ENCODE measurements at regions of chr1 and their contacts with region 1.

Region 1: DNA sequence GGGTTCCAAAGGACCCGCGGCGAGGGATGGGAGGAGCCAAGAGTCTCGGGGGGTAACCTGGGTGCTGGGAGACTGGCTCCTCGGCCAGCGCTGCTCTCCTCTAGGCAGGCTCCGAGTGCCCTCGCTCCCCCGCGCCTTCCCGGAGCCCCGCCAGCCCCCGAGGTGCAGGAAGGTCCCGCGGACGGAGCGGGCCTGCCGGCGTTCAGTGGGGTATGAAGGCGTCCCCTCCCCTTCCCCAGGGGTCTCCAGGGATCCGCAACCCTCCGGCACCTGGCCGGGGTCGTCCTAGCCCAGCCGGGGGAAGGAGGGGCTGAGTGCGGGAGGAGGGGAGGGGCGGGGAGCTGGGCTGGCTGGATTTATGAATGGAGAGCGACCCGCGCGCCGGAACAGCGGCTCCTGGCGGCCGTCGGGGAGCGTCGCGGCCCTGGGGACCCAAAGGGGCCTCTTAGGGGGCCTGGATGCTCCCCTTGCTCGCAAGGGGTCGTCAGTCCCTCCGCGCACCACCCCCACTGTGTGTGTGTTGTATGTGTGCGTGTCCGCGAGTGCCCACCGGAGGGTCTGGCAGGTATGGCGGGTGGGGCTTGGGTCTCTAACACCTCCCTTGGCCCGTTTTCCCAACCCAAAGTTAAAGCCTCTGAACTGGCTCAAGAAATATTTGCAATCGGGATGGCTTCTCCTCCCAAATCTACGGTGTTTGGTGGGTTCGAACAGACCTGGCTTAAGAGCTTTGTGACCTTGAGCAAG is 600 bp downstream of the HCRTR1 start:
- DNase-seq: peak; percentile 68
- ATAC-seq: peak; percentile 76
- H3K4me3 ChIP-seq: peak overlapping the region in 4 of 5 experiments; percentile 38 to 55 (median 44)
- H3K4me3 Mint-ChIP-seq: peak overlapping the region; percentile 70
- H3K27ac ChIP-seq: no peak overlapping the region
- H3K27ac Mint-ChIP-seq: no peak overlapping the region
- H3K4me1 ChIP-seq: peaks cover 13 to 19% of the 10 kb centered on the region in 2 donors
- H3K4me1 Mint-ChIP-seq: peaks cover 22% of the 10 kb centered on the region
- H3K27me3 ChIP-seq: peaks cover 0 to 33% (median 12%) of the 10 kb centered on the region in 4 experiments
- H3K27me3 Mint-ChIP-seq: peaks cover 35% of the 10 kb centered on the region
- CTCF ChIP-seq: peak; percentile 87

Region 2: DNA sequence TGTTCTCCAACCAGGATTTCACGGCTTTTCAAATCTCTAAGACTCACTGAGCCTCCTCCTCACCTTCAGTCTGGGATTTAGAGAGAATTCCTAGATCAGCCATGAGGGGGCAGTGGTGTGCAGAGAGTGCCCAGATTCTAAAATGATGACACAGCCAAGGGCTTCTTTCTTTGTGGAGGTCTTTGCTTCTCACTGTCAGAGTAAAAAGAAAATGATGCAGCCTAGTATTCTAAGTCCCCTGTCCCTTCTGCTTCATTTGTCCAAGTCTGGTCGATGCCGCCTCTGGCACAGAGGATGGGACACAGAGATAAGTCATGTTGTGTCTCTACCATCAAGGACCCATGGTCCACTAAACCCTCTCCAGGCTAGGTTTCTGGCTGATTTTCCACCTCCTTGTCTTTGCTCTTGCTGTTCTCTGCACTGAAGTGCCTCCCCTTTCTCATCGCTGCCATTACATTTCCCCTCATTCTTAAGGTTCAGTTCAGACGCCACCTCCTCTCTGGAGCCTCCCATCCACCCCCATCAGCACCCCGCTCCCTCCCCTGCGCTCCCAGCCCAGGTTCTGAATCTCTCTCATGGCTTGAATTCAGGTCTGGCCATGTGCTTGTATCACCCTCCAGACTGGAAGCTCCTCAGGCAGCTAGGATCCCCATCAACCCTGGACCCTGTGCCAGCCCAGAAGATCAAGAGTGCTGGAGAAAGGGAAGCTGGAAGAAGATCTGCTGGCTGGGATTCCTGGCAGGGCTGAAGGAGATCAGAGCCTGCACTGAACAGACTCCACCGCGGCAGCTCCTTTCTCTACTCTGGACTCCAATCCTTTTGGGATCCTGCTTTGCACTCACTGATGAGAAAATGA is 53.7 kb before region 1 on chr1:
- CTCF ChIA-PET with region 1: interaction called, 33 read pairs
- POLR2A ChIA-PET with region 1: no interaction called
- intact Hi-C with region 1: loop called (anchors 1 kb)
- DNase-seq: peak; percentile 63
- ATAC-seq: peak; percentile 69
- H3K4me3 ChIP-seq: no peak overlapping the region
- H3K4me3 Mint-ChIP-seq: no peak overlapping the region
- H3K27ac ChIP-seq: no peak overlapping the region
- H3K27ac Mint-ChIP-seq: no peak overlapping the region
- H3K4me1 ChIP-seq: no peaks in the 10 kb centered on the region
- H3K4me1 Mint-ChIP-seq: no peaks in the 10 kb centered on the region
- H3K27me3 ChIP-seq: peaks cover 0 to 4% (median 2%) of the 10 kb centered on the region in 4 experiments
- H3K27me3 Mint-ChIP-seq: peaks cover 33% of the 10 kb centered on the region
- CTCF ChIP-seq: peak; percentile 87

Region 3: DNA sequence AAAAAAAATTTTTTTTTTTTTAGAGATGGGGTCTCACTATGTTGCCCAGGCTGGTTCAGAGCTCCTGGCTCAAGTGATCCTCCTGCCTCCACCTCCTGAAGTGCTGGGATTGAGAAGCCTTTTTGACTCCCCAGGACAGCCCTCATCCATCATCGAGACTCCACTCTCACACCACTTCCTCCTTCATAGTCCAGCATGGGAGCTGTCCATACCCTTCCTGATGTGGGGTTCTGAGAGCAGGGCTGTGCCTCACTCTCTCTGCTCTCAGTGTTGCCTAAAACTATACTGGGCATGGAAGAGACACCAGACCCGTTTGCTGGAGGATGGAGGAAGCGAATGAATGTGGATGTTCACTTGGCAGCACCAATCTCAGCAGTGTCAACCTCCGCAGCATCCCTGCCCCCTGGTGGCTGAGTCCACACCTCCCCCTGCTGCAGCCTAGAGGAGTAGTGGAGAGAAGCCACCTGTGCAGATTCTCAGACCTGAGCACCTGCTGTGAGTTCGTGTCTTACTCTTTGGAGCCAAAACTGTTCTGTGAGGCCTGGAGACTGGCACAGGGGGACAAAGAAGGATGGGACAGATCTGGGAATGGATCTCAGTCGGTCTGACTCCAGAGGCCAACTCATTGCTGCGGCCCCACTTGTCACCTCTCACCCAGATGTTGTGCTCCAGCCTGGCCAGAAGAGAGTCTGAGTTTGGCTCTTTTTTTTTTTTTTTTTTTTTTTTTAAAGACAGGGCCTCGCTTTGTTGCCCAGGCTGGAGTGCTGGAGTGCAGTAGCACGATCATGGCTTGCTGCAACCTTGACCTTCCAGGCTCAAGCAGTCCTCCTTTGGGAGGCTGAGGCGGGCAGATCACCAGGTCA is 24.1 kb before region 1 on chr1:
- CTCF ChIA-PET with region 1: interaction called, 10 read pairs
- POLR2A ChIA-PET with region 1: no interaction called
- intact Hi-C with region 1: loop called (anchors 1 kb)
- DNase-seq: peak; percentile 75
- ATAC-seq: peak; percentile 81
- H3K4me3 ChIP-seq: no peak overlapping the region
- H3K4me3 Mint-ChIP-seq: no peak overlapping the region
- H3K27ac ChIP-seq: no peak overlapping the region
- H3K27ac Mint-ChIP-seq: no peak overlapping the region
- H3K4me1 ChIP-seq: no peaks in the 10 kb centered on the region
- H3K4me1 Mint-ChIP-seq: peaks cover 11% of the 10 kb centered on the region
- H3K27me3 ChIP-seq: peaks cover 0 to 12% (median 2%) of the 10 kb centered on the region in 4 experiments
- H3K27me3 Mint-ChIP-seq: peaks cover 28% of the 10 kb centered on the region
- CTCF ChIP-seq: peak; percentile 65

Measured in B cell (primary cell).